ENCODE measurements at regions of chr7 and their contacts with region 1.

Region 1: GRCh38 chr7:55084307-55084706 is 65.5 kb downstream of the EGFR start:
- DNase-seq: no peak
- ATAC-seq: no peak
- H3K4me3 ChIP-seq: no peak overlapping the region
- H3K27ac ChIP-seq: no peak overlapping the region
- H3K4me1 ChIP-seq: peaks cover 0 to 44% (median 18%) of the 10 kb centered on the region in 12 donors
- H3K27me3 ChIP-seq: no peaks in the 10 kb centered on the region
- CTCF ChIP-seq: no peak
- POLR2A ChIP-seq: no peak

Region 2: DNA sequence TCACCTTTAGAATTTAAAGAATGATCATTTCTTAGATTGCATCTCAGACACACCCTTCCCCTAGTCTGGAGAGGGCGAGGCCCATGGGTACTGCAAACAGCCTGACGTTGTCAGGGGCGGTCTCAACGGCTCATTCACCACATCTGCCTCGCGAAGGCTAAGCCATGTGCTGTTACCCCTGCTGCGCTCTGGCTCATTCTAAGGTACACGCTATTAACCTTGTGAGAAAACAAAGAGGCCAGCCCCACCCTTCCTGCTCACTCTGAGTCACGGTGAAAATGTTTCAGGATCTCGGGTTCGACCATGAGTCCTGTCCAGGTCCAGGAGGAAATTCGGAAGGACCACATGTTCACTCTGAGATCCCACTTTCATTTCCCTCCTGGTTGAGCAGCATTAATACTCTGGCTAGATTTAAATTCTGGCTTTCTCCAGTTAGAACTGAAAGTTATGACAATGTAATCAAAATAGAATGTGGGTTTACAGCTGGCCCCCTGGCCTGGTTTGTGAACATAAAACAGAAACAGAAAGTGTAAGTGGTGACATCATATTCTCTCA is 10.3 kb before region 1 on chr7:
- intact Hi-C with region 1: loop called in 1 of 10 experiments (anchors 1 kb)
- DNase-seq: peak in 2 of 5 donors; percentile 38 to 76
- ATAC-seq: peak; percentile 59 to 87 (median 82)
- H3K4me3 ChIP-seq: peak overlapping the region in 9 of 12 donors; percentile 6 to 43 (median 26)
- H3K27ac ChIP-seq: peak overlapping the region; percentile 14 to 79 (median 72)
- H3K4me1 ChIP-seq: peaks cover 0 to 55% (median 21%) of the 10 kb centered on the region in 12 donors
- H3K27me3 ChIP-seq: no peaks in the 10 kb centered on the region
- CTCF ChIP-seq: no peak
- POLR2A ChIP-seq: no peak

Measured in heart left ventricle (tissue), 16 donors.